PC-3 (cell line): ENCODE measurements at regions of chr4 and their contacts with region 1.

Region 1: GRCh38 chr4:55736605-55737183 is 82.9 kb upstream of the EXOC1L start:
- DNase-seq: peak; percentile 64
- ATAC-seq: no peak
- H3K4me3 ChIP-seq: no peak overlapping the region
- H3K27ac ChIP-seq: no peak overlapping the region
- H3K4me1 ChIP-seq: peaks cover 15% of the 10 kb centered on the region
- H3K27me3 ChIP-seq: no peaks in the 10 kb centered on the region
- CTCF ChIP-seq: peak; percentile 77

Region 2: DNA sequence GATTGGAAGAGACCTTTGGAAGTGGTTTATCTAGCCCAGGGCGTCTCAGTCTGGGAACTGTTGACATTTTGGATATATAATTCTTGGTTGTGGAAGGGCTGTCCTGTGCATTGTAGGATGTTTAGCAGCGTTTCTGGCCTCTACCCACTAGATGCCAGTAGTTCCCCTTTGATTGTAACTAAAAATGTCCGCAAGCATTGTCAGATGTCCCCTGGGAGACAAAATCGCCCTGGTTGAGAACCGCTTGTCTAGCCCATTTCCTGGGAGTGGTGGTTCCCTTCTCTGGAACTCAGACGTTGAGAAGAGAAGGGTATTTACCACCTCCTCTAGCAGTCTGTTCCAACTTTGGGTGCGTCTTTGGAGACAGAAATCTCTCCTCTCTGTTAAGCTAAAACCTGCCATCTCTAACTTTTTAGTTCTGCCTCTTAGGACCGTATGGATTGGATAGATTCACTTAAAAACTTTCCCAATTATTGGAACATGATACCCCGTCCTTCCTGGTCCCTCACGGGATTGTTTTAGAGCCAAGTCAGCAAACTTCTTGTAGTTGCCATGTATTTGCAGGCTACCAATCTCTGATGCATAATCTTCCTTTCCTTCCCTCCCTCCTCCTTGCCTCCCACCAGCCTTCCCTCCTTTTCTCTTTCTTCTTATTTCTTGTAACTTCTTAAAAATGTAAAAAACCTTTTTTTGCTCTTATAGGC is 327.1 kb before region 1 on chr4:
- CTCF ChIA-PET with region 1: no interaction called
- POLR2A ChIA-PET with region 1: no interaction called
- intact Hi-C with region 1: no loop called
- DNase-seq: no peak
- ATAC-seq: peak; percentile 46
- H3K4me3 ChIP-seq: no peak overlapping the region
- H3K27ac ChIP-seq: no peak overlapping the region
- H3K4me1 ChIP-seq: no peaks in the 10 kb centered on the region
- H3K27me3 ChIP-seq: no peaks in the 10 kb centered on the region
- CTCF ChIP-seq: peak; percentile 48

Region 3: GRCh38 chr4:55554453-55555030 is 182.2 kb before region 1 on chr4:
- CTCF ChIA-PET with region 1: interaction called, 5 read pairs
- POLR2A ChIA-PET with region 1: no interaction called
- intact Hi-C with region 1: loop called (anchors 1 kb)
- DNase-seq: peak; percentile 71
- ATAC-seq: 0 out of 2 replicates have a peak, but pooled peaks have one; percentile 4
- H3K4me3 ChIP-seq: no peak overlapping the region
- H3K27ac ChIP-seq: no peak overlapping the region
- H3K4me1 ChIP-seq: peaks cover 26% of the 10 kb centered on the region
- H3K27me3 ChIP-seq: no peaks in the 10 kb centered on the region
- CTCF ChIP-seq: peak; percentile 83

Region 4: GRCh38 chr4:55635741-55636655 is 100.7 kb before region 1 on chr4 and contains the start of gene NMU:
- CTCF ChIA-PET with region 1: no interaction called
- POLR2A ChIA-PET with region 1: no interaction called
- intact Hi-C with region 1: loop called (anchors 2 kb)
- DNase-seq: peak; percentile 79
- ATAC-seq: peak; percentile 84
- H3K4me3 ChIP-seq: peak within 1 kb of the TSS; percentile 69
- H3K27ac ChIP-seq: no peak within 1 kb of the TSS
- H3K4me1 ChIP-seq: peaks cover 13% of the 10 kb centered on the region
- H3K27me3 ChIP-seq: no peaks in the 10 kb centered on the region
- CTCF ChIP-seq: peak; percentile 43; the same call in 1 of the 2 replicates
- total RNA-seq, gene NMU: 28.5 and 40.2 TPM in 2 replicates